ENCODE measurements at regions of chr14 and their contacts with region 1.

Region 1: DNA sequence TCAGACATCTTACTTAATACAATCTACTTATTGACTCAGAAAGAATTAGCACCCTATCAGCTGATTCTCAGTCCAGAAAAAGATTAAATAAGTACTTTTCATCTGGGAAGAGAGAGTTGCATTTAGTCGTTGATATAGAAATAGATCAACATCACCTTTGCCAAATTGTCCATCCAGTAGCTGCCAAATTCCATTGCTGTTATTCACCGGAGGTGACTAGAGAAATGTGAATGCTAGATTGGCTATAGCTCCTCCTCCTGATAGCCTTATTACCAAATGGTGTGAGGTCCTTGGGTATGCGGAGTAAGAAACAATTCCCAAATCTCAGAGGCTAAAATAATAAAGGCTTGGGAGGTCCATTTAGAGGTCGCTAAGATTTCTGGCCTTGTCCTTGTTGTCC is 723.3 kb upstream of the FLRT2 start:
- DNase-seq: peak; percentile 79
- H3K4me3 Mint-ChIP-seq: no peak overlapping the region
- H3K27ac Mint-ChIP-seq: peak overlapping the region; percentile 86
- H3K4me1 Mint-ChIP-seq: peaks cover 17% of the 10 kb centered on the region
- H3K27me3 Mint-ChIP-seq: no peaks in the 10 kb centered on the region
- CTCF ChIP-seq: no peak

Region 2: GRCh38 chr14:84785996-84786395 is 20.6 kb before region 1 on chr14:
- CTCF ChIA-PET with region 1: no interaction called
- POLR2A ChIA-PET with region 1: no interaction called
- intact Hi-C with region 1: no loop called
- DNase-seq: peak; percentile 6
- H3K4me3 Mint-ChIP-seq: no peak overlapping the region
- H3K27ac Mint-ChIP-seq: no peak overlapping the region
- H3K4me1 Mint-ChIP-seq: no peaks in the 10 kb centered on the region
- H3K27me3 Mint-ChIP-seq: no peaks in the 10 kb centered on the region
- CTCF ChIP-seq: no peak

Region 3: GRCh38 chr14:84825481-84825880 is 18.9 kb after region 1 on chr14:
- CTCF ChIA-PET with region 1: no interaction called
- POLR2A ChIA-PET with region 1: interaction called, 11 read pairs
- intact Hi-C with region 1: no loop called
- DNase-seq: peak; percentile 88
- H3K4me3 Mint-ChIP-seq: no peak overlapping the region
- H3K27ac Mint-ChIP-seq: peak overlapping the region; percentile 86
- H3K4me1 Mint-ChIP-seq: peaks cover 24% of the 10 kb centered on the region
- H3K27me3 Mint-ChIP-seq: no peaks in the 10 kb centered on the region
- CTCF ChIP-seq: no peak